PC-3 (cell line): ENCODE measurements at regions of chr3 and their contacts with region 1.

Region 1: DNA sequence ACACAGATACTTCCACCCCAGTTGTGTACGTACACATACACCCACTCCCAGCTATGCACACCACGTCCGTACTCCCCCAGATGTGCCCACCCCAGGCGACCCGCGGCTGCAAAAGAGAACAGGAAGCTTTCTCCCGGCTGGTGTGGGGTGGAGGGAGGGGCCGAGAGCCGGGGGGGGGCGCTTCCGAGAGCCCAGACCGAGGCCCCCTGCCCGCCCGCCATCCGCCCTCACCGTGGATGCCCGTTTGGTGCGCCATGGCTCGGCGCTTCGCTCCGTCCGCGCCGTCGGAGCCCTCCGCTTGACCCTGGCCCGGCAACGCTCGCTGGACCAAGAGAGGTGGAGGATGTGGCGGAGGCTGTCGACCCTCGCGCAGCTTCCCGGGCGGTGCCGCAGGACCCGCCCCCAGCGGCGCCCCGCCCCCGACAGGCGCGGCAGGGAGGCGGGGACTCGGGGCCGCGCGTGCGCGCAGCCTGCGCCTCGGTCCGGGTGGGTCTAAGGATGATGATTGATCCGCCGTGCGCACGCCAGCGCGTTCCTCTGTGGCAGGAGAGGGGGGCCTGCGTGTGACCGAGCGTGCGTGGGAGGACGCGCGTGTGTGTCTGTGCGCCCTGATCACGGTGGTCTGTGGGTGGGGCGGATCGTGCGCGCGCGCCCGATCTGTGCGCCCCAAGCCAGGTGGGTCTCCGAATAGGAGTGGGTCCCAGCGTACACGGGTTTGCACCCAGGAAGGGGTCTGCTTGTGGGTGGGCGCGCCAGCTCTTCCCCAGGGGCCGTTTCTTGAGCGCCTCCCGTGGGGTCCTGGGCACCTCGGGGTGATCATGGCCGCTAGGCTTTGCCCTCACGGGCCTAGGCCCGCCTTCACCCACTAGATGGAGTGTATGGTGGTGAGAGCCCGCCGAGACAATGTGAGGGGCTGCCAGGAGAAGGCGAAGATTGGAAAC is at the start of gene TWF2:
- DNase-seq: peak; percentile 86
- ATAC-seq: peak; percentile 64
- H3K4me3 ChIP-seq: peak within 1 kb of the TSS; percentile 97
- H3K27ac ChIP-seq: peak within 1 kb of the TSS; percentile 93
- H3K4me1 ChIP-seq: peaks cover 39% of the 10 kb centered on the region
- H3K27me3 ChIP-seq: no peaks in the 10 kb centered on the region
- CTCF ChIP-seq: peak; percentile 37; the same call in 1 of the 2 replicates
- total RNA-seq, gene TWF2: 147 and 166 TPM in 2 replicates

Region 2: DNA sequence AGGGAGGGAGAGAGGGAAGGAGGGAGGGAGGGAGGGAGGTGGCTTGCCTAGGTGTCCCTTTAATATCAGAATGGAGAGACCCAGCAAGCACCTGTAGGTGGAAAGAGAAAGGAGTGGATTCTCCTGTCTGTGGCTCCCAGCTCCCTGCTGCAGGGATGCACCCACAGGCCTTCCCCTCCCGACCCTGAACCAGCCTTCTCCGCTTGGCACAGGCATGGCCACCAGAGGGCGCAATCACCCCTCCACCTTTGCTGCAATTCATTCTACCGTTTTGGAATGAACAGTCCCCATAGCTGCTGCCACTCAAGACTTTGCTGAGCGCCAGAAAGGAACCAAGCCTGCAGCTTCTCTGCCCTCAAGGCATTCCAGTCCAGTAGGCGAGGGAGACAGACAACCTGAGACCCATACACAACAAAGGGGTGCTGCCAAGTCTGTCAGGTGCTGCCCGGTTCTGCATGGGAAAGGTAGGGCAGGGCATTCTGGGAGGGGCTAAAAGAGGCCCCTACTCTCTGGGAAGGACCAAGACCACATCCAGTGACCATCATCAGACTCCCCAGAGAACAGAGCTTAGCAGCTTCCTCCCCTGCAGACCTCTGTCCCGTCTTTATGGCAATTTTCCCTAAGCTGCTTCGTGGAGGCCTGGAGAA is 18.5 kb before region 1 on chr3:
- CTCF ChIA-PET with region 1: interaction called, 28 read pairs
- POLR2A ChIA-PET with region 1: interaction called, 8 read pairs
- intact Hi-C with region 1: loop called (anchors 1 kb)
- DNase-seq: peak; percentile 93
- ATAC-seq: peak; percentile 45
- H3K4me3 ChIP-seq: no peak overlapping the region
- H3K27ac ChIP-seq: 0 out of 2 replicates have a peak overlapping the region, but pooled peaks have one; percentile 13
- H3K4me1 ChIP-seq: peaks cover 49% of the 10 kb centered on the region
- H3K27me3 ChIP-seq: no peaks in the 10 kb centered on the region
- CTCF ChIP-seq: peak; percentile 94

Region 3: GRCh38 chr3:52299879-52300611 is 61.0 kb after region 1 on chr3:
- CTCF ChIA-PET with region 1: no interaction called
- POLR2A ChIA-PET with region 1: no interaction called
- intact Hi-C with region 1: no loop called
- DNase-seq: peak; percentile 23
- ATAC-seq: peak; percentile 78
- H3K4me3 ChIP-seq: no peak overlapping the region
- H3K27ac ChIP-seq: no peak overlapping the region
- H3K4me1 ChIP-seq: peaks cover 4% of the 10 kb centered on the region; the same call in 1 of the 2 replicates
- H3K27me3 ChIP-seq: no peaks in the 10 kb centered on the region
- CTCF ChIP-seq: 0 out of 2 replicates have a peak, but pooled peaks have one; percentile 9